GM10248 (cell line): ENCODE measurements at regions of chr7 and their contacts with region 1.

Region 1: DNA sequence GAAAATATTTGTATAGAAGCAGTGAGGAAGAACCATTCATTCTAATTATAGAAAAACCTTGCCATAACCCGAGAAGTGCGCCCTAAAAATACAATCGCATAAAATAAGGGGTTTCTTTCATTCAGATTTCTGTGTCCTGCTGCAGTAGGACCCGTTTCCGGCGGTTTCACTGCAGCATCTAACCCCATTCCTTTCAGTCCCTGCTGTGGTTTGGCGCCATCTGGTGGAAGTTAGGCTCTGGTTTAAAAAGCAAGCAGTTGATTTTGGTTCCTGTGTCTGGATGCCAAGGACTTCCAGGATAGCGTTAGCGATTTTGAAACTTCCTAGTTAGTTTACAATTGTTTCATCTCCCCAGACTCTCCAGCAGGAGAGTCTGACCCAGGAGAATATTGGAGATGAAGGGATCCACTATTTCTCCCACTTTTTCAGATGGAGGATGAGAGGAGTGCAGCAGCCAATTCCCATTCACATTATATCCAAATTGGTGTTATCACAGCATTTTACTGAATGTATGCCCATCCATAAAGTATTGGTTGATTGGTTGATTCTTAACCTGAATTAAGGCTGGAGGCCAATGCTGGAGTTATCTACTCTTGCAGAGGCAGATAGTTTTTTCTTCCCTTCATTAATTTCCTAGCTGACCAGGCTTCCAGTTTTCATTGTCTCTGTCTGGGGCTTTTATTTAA is 128.8 kb upstream of the CACNA2D1 start:
- DNase-seq: peak; percentile 69
- CTCF ChIP-seq: peak; percentile 87

Region 2: DNA sequence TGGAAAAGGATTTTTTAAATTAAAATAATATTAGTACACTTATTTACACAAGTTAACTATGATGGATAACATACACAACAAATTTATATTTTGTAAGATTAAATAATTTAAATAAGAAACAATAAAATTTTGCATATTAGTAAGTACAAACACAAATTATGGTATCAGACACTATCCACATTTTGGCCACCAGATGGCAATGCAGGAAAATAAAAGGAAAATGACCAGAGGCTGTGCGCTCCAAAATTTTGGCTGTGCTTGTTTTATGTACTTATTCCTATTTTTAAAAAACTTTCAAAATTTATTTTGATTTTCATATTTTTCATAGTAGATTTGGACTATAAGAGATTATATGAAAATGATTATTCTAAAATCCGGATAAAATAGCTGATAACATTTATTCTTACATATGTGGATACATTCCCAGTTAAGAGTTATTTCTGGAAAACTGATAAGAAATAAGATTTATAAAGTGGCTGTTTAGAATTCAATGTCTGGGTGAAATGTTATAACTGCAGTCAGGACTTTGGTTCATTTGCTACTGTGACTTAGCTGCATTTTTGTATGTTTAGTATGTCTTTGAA is 527.7 kb before region 1 on chr7:
- CTCF ChIA-PET with region 1: interaction called, 16 read pairs
- POLR2A ChIA-PET with region 1: no interaction called
- DNase-seq: no peak
- CTCF ChIP-seq: peak; percentile 48

Region 3: GRCh38 chr7:82234457-82235049 is 337.8 kb before region 1 on chr7:
- CTCF ChIA-PET with region 1: interaction called, 17 read pairs
- POLR2A ChIA-PET with region 1: no interaction called
- DNase-seq: no peak
- CTCF ChIP-seq: peak; percentile 25

Region 4: DNA sequence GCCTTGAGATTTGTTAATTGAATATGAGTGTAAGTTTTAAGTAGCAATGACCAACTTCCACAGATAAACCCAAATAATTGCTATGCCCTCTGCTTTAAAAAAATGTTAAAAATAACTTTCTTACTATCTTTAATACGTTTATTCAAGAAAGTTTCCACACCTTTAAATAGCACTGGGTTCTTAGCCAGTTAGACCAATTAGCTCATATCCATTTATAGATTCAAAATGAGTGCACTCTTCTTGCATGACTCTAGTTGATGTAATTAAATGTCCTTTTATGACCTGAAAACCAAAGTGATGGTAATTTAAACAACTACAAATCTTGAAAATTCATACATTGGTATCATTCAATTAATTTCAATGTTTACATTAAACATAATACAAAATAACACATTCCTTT is 77.9 kb before region 1 on chr7:
- CTCF ChIA-PET with region 1: no interaction called
- POLR2A ChIA-PET with region 1: no interaction called
- DNase-seq: no peak
- CTCF ChIP-seq: no peak

Region 5: DNA sequence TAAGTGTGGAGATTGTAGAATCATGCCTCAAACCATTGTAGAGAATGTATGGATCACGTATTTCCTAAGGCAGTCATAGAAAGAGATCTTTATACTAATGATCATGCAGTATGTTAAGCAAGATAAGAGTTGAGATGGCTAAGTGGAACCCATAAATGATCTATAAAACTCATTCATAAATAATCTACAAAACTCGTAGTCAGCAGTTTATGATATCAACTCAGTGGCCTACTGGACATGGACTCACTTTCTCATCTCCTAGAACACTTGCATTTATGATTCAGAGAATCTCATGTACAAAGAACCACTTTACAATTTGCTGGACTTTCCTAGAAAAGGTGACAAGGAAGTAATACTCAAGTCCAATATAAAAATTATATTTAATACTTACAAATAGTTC is 250.7 kb after region 1 on chr7:
- CTCF ChIA-PET with region 1: no interaction called
- POLR2A ChIA-PET with region 1: no interaction called
- DNase-seq: no peak
- CTCF ChIP-seq: no peak